CD4-positive, alpha-beta T cell (primary cell): ENCODE measurements at regions of chr11 and their contacts with region 1.

Region 1: DNA sequence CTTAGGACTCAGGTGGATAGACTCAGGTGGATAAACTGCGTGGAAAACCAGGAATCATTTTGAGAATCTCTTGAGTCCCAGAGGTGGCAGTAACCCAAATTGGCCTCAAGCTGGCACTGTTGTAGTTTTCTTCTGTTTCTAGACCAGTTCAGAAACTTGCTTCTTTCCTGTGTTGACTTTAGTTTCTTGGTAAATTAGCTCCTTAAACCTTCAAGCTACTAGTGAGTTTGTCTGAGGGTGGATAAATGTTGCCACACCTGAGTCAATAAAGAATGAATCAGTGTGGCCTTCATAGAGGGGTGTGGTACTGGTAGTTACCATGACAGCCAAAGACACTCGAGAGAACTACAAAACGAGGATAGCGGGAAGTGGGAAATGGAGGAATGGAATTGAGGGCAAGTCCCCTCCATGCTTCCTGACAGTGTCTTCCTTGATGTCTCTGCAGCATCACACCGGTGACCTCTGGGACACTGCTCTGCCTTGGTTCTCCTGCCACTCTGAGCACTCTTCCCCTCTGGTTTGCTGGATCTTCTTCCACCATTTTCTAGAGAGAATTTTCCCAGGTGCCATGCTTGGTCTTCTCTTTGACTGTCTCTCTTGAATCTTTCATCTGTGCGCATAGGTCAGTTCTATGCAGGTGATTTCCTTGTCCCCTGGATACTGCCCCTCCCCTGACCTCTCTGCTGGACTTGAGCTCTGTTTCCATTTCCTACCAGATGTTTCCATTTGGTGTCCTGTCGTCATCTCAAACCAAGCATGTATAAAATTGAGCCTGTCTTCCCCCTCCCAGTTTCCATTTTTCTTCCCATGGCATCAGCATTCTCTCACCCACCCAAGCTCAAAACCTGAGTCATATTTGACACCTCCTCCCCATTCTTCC is 7.2 kb downstream of the POLD4 start:
- DNase-seq: peak in 4 of 14 experiments; percentile 39 to 65 (median 55)
- ATAC-seq: peak; percentile 71
- H3K4me3 ChIP-seq: no peak overlapping the region
- H3K4me3 Mint-ChIP-seq: peak overlapping the region; percentile 57
- H3K27ac ChIP-seq: peak overlapping the region in 1 of 2 donors; percentile 18
- H3K27ac Mint-ChIP-seq: peak overlapping the region; percentile 78
- H3K4me1 ChIP-seq: peaks cover 40% of the 10 kb centered on the region
- H3K4me1 Mint-ChIP-seq: peaks cover 63% of the 10 kb centered on the region
- H3K27me3 ChIP-seq: no peaks in the 10 kb centered on the region
- H3K27me3 Mint-ChIP-seq: no peaks in the 10 kb centered on the region
- CTCF ChIP-seq: peak; percentile 81

Region 2: DNA sequence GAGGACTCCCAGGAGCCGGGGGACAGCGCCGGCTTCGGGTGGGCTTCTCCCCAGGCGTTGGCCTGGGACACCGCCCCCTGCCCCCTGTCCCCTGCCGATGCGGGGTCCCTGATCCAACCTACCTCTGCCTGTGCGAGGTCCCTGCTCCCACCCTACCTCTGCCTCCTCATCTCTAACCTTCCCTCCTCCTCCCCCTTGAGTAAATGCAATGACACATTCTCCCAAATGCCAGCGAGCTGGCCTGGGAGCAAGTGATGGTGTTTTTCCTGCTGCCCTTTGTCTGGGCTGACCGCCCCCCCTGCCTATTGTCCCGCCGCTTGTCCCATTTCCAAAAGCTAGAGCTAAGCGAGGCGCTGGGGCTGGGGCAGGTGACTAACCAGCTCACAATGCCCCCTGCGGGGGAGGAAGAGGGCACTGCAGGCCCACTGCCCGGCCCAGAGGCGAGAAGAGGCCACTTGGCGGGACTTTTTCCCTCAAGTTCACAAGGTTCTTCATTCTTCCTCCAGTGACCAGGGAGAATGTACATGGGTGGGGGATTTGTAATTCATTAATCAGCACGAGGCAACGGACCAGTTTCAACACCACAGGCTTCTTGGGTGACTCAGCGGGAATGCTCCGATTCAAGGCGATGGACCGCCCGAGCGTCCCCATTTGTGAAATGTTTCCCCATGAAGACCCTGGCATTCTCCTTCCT is 27.9 kb after region 1 on chr11:
- CTCF ChIA-PET with region 1: interaction called, 241 read pairs
- POLR2A ChIA-PET with region 1: interaction called, 81 read pairs
- intact Hi-C with region 1: no loop called
- DNase-seq: peak in 10 of 14 experiments; percentile 26 to 83 (median 55)
- ATAC-seq: peak; percentile 46
- H3K4me3 ChIP-seq: peak overlapping the region; percentile 48
- H3K4me3 Mint-ChIP-seq: peak overlapping the region; percentile 91
- H3K27ac ChIP-seq: no peak overlapping the region
- H3K27ac Mint-ChIP-seq: peak overlapping the region; percentile 91
- H3K4me1 ChIP-seq: peaks cover 61% of the 10 kb centered on the region
- H3K4me1 Mint-ChIP-seq: peaks cover 51% of the 10 kb centered on the region
- H3K27me3 ChIP-seq: peaks cover 6 to 16% of the 10 kb centered on the region in 2 experiments
- H3K27me3 Mint-ChIP-seq: peaks cover 42% of the 10 kb centered on the region
- CTCF ChIP-seq: peak; percentile 40

Region 3: DNA sequence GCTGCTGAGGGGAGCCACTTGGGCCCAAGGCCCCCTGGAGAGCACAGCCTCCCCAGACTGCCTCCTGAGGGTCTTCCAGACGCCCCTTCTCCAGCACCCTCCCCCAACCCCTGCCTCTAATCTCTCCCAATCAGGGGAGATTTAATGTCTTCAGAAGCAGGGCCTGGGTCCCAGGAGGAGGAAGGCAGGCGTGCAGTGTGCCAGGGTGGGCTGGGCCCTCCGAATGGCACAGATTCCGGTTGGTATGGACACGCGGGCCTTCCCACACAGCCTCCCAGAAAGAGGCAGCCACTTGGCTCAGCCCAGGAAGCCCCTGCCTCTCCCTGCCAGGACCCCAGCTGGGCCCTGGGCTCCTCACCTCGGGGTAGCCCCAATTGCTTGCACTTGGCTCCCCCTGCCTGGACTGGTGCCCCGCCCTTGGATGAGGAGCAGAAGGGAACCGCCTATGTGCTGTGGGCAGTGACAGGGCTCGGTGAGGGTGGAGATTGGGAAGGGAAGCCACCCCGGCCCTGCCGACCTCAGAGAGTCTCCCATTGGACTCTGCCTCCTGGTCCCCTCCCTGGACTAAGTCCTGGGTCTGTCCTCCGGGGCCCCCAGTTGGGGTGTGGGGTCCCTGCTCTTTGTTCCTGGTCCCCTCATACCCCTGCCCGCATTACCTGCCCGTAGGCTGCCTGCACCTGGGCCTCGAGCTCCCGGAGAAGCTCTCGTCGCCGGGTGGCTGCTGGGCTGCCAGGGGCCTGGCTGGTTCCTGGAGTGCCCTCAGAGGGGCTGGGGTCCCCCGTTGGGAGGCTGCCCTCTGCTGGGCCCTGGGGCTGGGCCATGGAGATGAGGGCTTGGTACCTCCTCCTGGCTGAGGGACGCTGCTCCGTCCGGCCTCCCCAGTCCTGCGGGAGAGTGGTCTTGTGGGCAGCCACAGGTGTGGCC is 177.7 kb after region 1 on chr11:
- CTCF ChIA-PET with region 1: no interaction called
- POLR2A ChIA-PET with region 1: no interaction called
- intact Hi-C with region 1: no loop called
- DNase-seq: no peak
- ATAC-seq: no peak
- H3K4me3 ChIP-seq: no peak overlapping the region
- H3K4me3 Mint-ChIP-seq: no peak overlapping the region
- H3K27ac ChIP-seq: no peak overlapping the region
- H3K27ac Mint-ChIP-seq: no peak overlapping the region
- H3K4me1 ChIP-seq: no peaks in the 10 kb centered on the region
- H3K4me1 Mint-ChIP-seq: no peaks in the 10 kb centered on the region
- H3K27me3 ChIP-seq: no peaks in the 10 kb centered on the region
- H3K27me3 Mint-ChIP-seq: peaks cover 4% of the 10 kb centered on the region
- CTCF ChIP-seq: no peak